CD4-positive, alpha-beta T cell (primary cell): ENCODE measurements at regions of chr19 and their contacts with region 1.

Region 1: GRCh38 chr19:32971715-32972540 is at the starts of genes CEP89 and FAAP24:
- DNase-seq: peak; percentile 95 to 100 (median 98)
- ATAC-seq: peak; percentile 99
- H3K4me3 ChIP-seq: peak within 1 kb of the TSS; percentile 60
- H3K4me3 Mint-ChIP-seq: peak within 1 kb of the TSS; percentile 96
- H3K27ac ChIP-seq: peak within 1 kb of the TSS; percentile 55 to 76
- H3K27ac Mint-ChIP-seq: peak within 1 kb of the TSS; percentile 79
- H3K4me1 ChIP-seq: peaks cover 23% of the 10 kb centered on the region
- H3K4me1 Mint-ChIP-seq: peaks cover 22% of the 10 kb centered on the region
- H3K27me3 ChIP-seq: no peaks in the 10 kb centered on the region
- H3K27me3 Mint-ChIP-seq: no peaks in the 10 kb centered on the region
- CTCF ChIP-seq: no peak
- total RNA-seq, gene CEP89: 4.0 to 5.1 TPM
- total RNA-seq, gene FAAP24: 0.91 to 1.4 TPM

Region 2: GRCh38 chr19:32345261-32346207 is 626.4 kb before region 1 on chr19 and contains the start of gene ZNF507:
- CTCF ChIA-PET with region 1: no interaction called
- POLR2A ChIA-PET with region 1: interaction called, 4 read pairs
- intact Hi-C with region 1: loop called in 1 of 2 experiments (anchors 5 kb)
- DNase-seq: peak; percentile 64 to 88 (median 75)
- ATAC-seq: peak; percentile 84
- H3K4me3 ChIP-seq: peak within 1 kb of the TSS; percentile 92
- H3K4me3 Mint-ChIP-seq: peak within 1 kb of the TSS; percentile 96
- H3K27ac ChIP-seq: peak within 1 kb of the TSS; percentile 58 to 82
- H3K27ac Mint-ChIP-seq: peak within 1 kb of the TSS; percentile 87
- H3K4me1 ChIP-seq: peaks cover 13% of the 10 kb centered on the region
- H3K4me1 Mint-ChIP-seq: peaks cover 50% of the 10 kb centered on the region
- H3K27me3 ChIP-seq: no peaks in the 10 kb centered on the region
- H3K27me3 Mint-ChIP-seq: peaks cover 5% of the 10 kb centered on the region
- CTCF ChIP-seq: no peak
- total RNA-seq, gene ZNF507: 30.4 to 31.3 TPM

Region 3: DNA sequence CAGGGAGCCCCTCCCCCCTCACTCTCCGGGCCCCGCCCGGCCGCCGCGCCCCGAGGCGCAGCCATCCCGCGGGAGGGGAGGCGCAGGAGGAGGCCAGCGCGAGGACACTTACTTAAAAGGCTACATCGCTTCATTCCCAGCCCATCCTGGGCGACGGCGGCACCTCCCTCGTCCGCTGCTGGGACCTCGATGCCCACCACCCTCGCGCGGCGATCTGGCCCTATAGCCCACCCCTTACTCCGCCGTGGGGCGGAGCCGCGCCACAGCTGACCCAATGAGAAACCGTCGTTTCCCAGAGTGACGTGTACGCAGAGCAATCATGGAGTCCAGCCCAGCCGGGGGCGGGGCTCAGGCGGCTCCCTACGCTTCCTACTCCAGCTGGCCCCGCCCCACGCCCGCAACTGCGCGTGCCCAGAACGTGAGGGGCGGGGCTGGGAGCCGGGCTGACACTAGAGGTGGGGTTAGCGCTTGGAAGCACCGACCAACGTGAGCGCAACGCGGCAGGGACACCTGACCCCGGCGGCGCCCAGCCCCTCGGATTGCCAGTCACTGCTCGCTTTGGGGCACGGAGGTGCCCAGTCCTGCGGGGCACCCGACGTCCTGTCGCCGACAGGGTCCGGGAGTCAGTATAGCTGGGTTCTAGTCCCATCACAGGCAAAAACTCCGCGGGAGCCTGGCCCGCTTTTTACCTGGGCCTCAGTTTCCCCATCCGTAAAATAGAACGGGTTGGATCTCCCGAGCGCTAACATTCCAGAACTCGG is 296.8 kb before region 1 on chr19 and contains the start of gene ANKRD27:
- CTCF ChIA-PET with region 1: no interaction called
- POLR2A ChIA-PET with region 1: interaction called, 11 read pairs
- intact Hi-C with region 1: loop called in 1 of 2 experiments (anchors 1 kb)
- DNase-seq: peak; percentile 94 to 99 (median 98)
- ATAC-seq: peak; percentile 94
- H3K4me3 ChIP-seq: peak within 1 kb of the TSS; percentile 89
- H3K4me3 Mint-ChIP-seq: peak within 1 kb of the TSS; percentile 95
- H3K27ac ChIP-seq: peak within 1 kb of the TSS in 1 of 2 donors; percentile 80
- H3K27ac Mint-ChIP-seq: peak within 1 kb of the TSS; percentile 79
- H3K4me1 ChIP-seq: peaks cover 53% of the 10 kb centered on the region
- H3K4me1 Mint-ChIP-seq: peaks cover 50% of the 10 kb centered on the region
- H3K27me3 ChIP-seq: peaks cover 14 to 21% of the 10 kb centered on the region in 2 experiments
- H3K27me3 Mint-ChIP-seq: peaks cover 8% of the 10 kb centered on the region
- CTCF ChIP-seq: no peak
- total RNA-seq, gene ANKRD27: 16.5 to 17.6 TPM

Region 4: DNA sequence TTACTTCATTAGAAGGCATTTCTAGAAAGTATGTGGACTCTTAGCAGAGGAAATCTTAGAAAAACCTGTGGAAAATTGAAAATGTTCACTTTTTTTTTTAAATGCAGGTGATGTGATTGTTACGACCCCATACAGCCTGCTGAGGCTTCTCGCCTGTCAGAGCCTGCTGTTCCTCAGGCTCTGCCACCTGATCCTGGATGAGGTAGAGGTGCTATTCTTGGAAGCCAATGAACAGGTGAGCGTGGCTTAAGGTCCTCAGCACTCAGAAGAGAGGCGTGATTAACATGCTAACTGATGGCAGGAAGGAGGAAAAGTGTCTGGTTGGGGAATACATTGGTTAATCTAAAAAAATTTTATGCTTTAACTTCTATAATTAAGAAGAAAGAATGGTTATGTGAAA is 173.7 kb before region 1 on chr19:
- CTCF ChIA-PET with region 1: no interaction called
- POLR2A ChIA-PET with region 1: no interaction called
- intact Hi-C with region 1: no loop called
- DNase-seq: no peak
- ATAC-seq: no peak
- H3K4me3 ChIP-seq: no peak overlapping the region
- H3K4me3 Mint-ChIP-seq: no peak overlapping the region
- H3K27ac ChIP-seq: no peak overlapping the region
- H3K27ac Mint-ChIP-seq: no peak overlapping the region
- H3K4me1 ChIP-seq: peaks cover 51% of the 10 kb centered on the region
- H3K4me1 Mint-ChIP-seq: peaks cover 68% of the 10 kb centered on the region
- H3K27me3 ChIP-seq: no peaks in the 10 kb centered on the region
- H3K27me3 Mint-ChIP-seq: no peaks in the 10 kb centered on the region
- CTCF ChIP-seq: no peak

Region 5: GRCh38 chr19:33080761-33081681 is 109.1 kb after region 1 on chr19 and contains the start of gene GPATCH1:
- CTCF ChIA-PET with region 1: no interaction called
- POLR2A ChIA-PET with region 1: interaction called, 3 read pairs
- intact Hi-C with region 1: loop called (anchors 2 to 10 kb)
- DNase-seq: peak; percentile 70 to 90 (median 80)
- ATAC-seq: peak; percentile 94
- H3K4me3 ChIP-seq: peak within 1 kb of the TSS; percentile 86
- H3K4me3 Mint-ChIP-seq: peak within 1 kb of the TSS; percentile 97
- H3K27ac ChIP-seq: peak within 1 kb of the TSS; percentile 59 to 71
- H3K27ac Mint-ChIP-seq: peak within 1 kb of the TSS; percentile 89
- H3K4me1 ChIP-seq: peaks cover 22% of the 10 kb centered on the region
- H3K4me1 Mint-ChIP-seq: peaks cover 23% of the 10 kb centered on the region
- H3K27me3 ChIP-seq: no peaks in the 10 kb centered on the region
- H3K27me3 Mint-ChIP-seq: no peaks in the 10 kb centered on the region
- CTCF ChIP-seq: no peak
- total RNA-seq, gene GPATCH1: 4.6 to 5.5 TPM

Region 6: DNA sequence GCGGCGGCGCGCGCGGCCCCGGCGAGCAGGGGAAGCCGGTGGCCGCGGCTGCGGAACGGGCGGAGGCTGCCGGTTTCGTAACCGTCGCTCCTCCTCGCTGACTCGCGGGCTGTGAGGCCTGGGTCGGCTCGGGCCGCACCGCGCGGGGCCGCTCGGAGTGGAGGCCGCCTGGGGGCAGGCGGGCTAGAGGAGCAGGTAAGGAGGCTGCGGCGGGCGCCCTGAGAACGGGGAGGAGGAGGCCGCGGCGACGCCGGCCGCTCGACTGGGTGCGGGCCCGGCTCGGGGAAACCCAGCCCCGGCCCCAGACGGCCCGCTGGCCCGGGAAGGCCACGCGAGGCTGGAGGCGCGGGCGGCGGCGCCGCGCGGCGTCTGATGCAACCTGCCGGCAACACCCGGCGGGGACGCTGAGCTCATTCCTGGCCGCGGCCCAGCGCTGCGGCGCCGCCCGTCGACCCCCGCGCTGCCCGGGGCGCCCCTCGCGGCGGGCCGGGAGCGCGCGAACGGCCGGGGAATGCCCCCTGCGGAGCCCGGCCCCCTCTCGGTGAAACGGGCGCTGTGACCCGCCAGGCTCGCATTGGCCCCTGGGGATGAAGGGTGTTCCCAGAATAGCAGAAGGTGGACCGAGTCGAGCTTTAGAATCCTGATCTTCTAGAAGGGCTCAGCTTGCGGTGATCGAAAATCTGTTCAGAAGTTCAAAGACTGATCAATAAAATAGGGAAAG is 401.9 kb after region 1 on chr19 and contains the start of gene CEBPG:
- CTCF ChIA-PET with region 1: no interaction called
- POLR2A ChIA-PET with region 1: no interaction called
- intact Hi-C with region 1: loop called in 1 of 2 experiments (anchors 5 kb)
- DNase-seq: peak in 11 of 14 experiments; percentile 18 to 88 (median 58)
- ATAC-seq: peak; percentile 27
- H3K4me3 ChIP-seq: peak within 1 kb of the TSS; percentile 97
- H3K4me3 Mint-ChIP-seq: peak within 1 kb of the TSS; percentile 93
- H3K27ac ChIP-seq: peak within 1 kb of the TSS; percentile 86 to 91
- H3K27ac Mint-ChIP-seq: peak within 1 kb of the TSS; percentile 89
- H3K4me1 ChIP-seq: peaks cover 40% of the 10 kb centered on the region
- H3K4me1 Mint-ChIP-seq: peaks cover 51% of the 10 kb centered on the region
- H3K27me3 ChIP-seq: no peaks in the 10 kb centered on the region
- H3K27me3 Mint-ChIP-seq: no peaks in the 10 kb centered on the region
- CTCF ChIP-seq: peak; percentile 32
- total RNA-seq, gene CEBPG: 15.5 TPM

Region 7: GRCh38 chr19:33734913-33735312 is 763.0 kb after region 1 on chr19:
- CTCF ChIA-PET with region 1: no interaction called
- POLR2A ChIA-PET with region 1: no interaction called
- intact Hi-C with region 1: no loop called
- DNase-seq: no peak
- ATAC-seq: no peak
- H3K4me3 ChIP-seq: no peak overlapping the region
- H3K4me3 Mint-ChIP-seq: no peak overlapping the region
- H3K27ac ChIP-seq: no peak overlapping the region
- H3K27ac Mint-ChIP-seq: no peak overlapping the region
- H3K4me1 ChIP-seq: no peaks in the 10 kb centered on the region
- H3K4me1 Mint-ChIP-seq: no peaks in the 10 kb centered on the region
- H3K27me3 ChIP-seq: peaks cover 0 to 3% of the 10 kb centered on the region in 2 experiments
- H3K27me3 Mint-ChIP-seq: peaks cover 8% of the 10 kb centered on the region
- CTCF ChIP-seq: no peak